Mucosa of descending colon (tissue), 3 donors: ENCODE measurements at regions of chr6 and their contacts with region 1.

Region 1: GRCh38 chr6:155327326-155328073 is 13.2 kb upstream of the TFB1M start:
- DNase-seq: peak in 2 of 3 donors; percentile 42 to 60
- ATAC-seq: peak; percentile 81
- H3K4me3 ChIP-seq: no peak overlapping the region
- H3K4me1 ChIP-seq: no peaks in the 10 kb centered on the region
- CTCF ChIP-seq: peak; percentile 61

Region 2: GRCh38 chr6:155171109-155171746 is 156.3 kb before region 1 on chr6:
- intact Hi-C with region 1: no loop called
- DNase-seq: no peak
- ATAC-seq: peak; percentile 59
- H3K4me3 ChIP-seq: no peak overlapping the region
- H3K4me1 ChIP-seq: peaks cover 5% of the 10 kb centered on the region
- CTCF ChIP-seq: no peak

Region 3: DNA sequence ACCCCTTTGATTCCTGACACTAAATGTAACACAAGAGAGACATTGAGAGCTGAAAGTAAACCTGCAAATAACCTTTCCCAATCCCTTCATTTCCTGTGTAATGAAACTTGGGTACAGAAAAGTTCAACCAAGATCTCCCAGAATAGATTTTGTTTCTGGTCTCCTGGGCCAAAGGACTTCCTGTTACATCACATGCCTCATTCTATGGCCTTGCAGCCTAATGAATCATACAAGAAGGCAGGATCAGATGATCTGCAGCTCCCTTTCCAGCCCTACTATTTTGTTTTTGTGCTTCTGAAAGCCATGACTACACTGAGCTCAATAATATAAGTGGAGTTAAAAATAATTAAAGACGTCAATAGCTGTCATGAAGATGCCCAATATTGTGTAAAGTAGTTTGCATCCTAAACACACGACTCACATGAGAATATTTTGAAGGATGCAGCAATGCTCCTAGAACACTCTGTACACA is 201.5 kb after region 1 on chr6:
- intact Hi-C with region 1: loop called in 1 of 2 experiments (anchors 10 kb)
- DNase-seq: no peak
- ATAC-seq: peak; percentile 38
- H3K4me3 ChIP-seq: no peak overlapping the region
- H3K4me1 ChIP-seq: no peaks in the 10 kb centered on the region
- CTCF ChIP-seq: no peak